Activated CD8-positive, alpha-beta T cell treated with anti-CD3 and anti-CD28 coated beads for 36 hours (primary cell): ENCODE measurements at regions of chr6 and their contacts with region 1.

Region 1: GRCh38 chr6:26196846-26197648 is 109.8 kb downstream of the HFE start:
- DNase-seq: peak; percentile 86
- ATAC-seq: peak; percentile 48
- H3K4me3 Mint-ChIP-seq: peak overlapping the region; percentile 96
- H3K27ac Mint-ChIP-seq: peak overlapping the region; percentile 96
- H3K4me1 Mint-ChIP-seq: peaks cover 24% of the 10 kb centered on the region
- H3K27me3 Mint-ChIP-seq: no peaks in the 10 kb centered on the region
- CTCF ChIP-seq: no peak

Region 2: DNA sequence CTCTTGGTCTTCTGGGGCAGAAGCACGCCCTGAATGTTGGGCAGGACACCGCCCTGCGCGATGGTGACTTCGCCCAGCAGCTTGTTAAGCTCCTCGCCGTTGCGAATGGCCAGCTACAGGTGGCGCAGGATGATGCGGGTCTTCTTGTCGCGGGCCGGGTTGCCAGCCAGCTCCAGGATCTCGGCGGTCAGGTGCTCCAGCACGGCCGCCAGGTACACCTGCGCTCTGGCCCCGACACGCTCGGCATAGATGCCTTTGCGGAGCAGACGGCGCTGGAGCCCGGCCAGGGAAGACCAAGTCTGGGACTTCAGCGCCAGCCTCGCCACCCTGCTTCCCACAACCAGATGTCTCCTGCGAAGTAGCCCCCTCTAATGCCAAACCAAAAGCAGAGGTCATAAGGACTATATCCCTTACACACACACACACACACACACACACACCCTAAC is 315.0 kb before region 1 on chr6:
- CTCF ChIA-PET with region 1: no interaction called
- POLR2A ChIA-PET with region 1: no interaction called
- intact Hi-C with region 1: no loop called
- DNase-seq: peak; percentile 53
- ATAC-seq: peak; percentile 92
- H3K4me3 Mint-ChIP-seq: peak overlapping the region; percentile 70
- H3K27ac Mint-ChIP-seq: peak overlapping the region; percentile 23
- H3K4me1 Mint-ChIP-seq: peaks cover 3% of the 10 kb centered on the region
- H3K27me3 Mint-ChIP-seq: peaks cover 3% of the 10 kb centered on the region
- CTCF ChIP-seq: peak; percentile 45

Region 3: GRCh38 chr6:26031595-26032339 is 165.3 kb before region 1 on chr6:
- CTCF ChIA-PET with region 1: no interaction called
- POLR2A ChIA-PET with region 1: interaction called, 99 read pairs
- intact Hi-C with region 1: loop called (anchors 5 kb)
- DNase-seq: peak; percentile 95
- ATAC-seq: peak; percentile 66
- H3K4me3 Mint-ChIP-seq: peak overlapping the region; percentile 91
- H3K27ac Mint-ChIP-seq: peak overlapping the region; percentile 98
- H3K4me1 Mint-ChIP-seq: peaks cover 50% of the 10 kb centered on the region
- H3K27me3 Mint-ChIP-seq: peaks cover 3% of the 10 kb centered on the region
- CTCF ChIP-seq: no peak

Region 4: GRCh38 chr6:26071135-26071534 is 125.9 kb before region 1 on chr6:
- CTCF ChIA-PET with region 1: no interaction called
- POLR2A ChIA-PET with region 1: no interaction called
- intact Hi-C with region 1: no loop called
- DNase-seq: no peak
- ATAC-seq: no peak
- H3K4me3 Mint-ChIP-seq: no peak overlapping the region
- H3K27ac Mint-ChIP-seq: no peak overlapping the region
- H3K4me1 Mint-ChIP-seq: no peaks in the 10 kb centered on the region
- H3K27me3 Mint-ChIP-seq: peaks cover 3% of the 10 kb centered on the region
- CTCF ChIP-seq: no peak

Region 5: GRCh38 chr6:26103770-26104456 is 93.1 kb before region 1 on chr6:
- CTCF ChIA-PET with region 1: no interaction called
- POLR2A ChIA-PET with region 1: interaction called, 28 read pairs
- intact Hi-C with region 1: no loop called
- DNase-seq: peak; percentile 90
- ATAC-seq: peak; percentile 87
- H3K4me3 Mint-ChIP-seq: peak overlapping the region; percentile 85
- H3K27ac Mint-ChIP-seq: peak overlapping the region; percentile 98
- H3K4me1 Mint-ChIP-seq: peaks cover 15% of the 10 kb centered on the region
- H3K27me3 Mint-ChIP-seq: peaks cover 2% of the 10 kb centered on the region
- CTCF ChIP-seq: peak; percentile 46

Region 6: DNA sequence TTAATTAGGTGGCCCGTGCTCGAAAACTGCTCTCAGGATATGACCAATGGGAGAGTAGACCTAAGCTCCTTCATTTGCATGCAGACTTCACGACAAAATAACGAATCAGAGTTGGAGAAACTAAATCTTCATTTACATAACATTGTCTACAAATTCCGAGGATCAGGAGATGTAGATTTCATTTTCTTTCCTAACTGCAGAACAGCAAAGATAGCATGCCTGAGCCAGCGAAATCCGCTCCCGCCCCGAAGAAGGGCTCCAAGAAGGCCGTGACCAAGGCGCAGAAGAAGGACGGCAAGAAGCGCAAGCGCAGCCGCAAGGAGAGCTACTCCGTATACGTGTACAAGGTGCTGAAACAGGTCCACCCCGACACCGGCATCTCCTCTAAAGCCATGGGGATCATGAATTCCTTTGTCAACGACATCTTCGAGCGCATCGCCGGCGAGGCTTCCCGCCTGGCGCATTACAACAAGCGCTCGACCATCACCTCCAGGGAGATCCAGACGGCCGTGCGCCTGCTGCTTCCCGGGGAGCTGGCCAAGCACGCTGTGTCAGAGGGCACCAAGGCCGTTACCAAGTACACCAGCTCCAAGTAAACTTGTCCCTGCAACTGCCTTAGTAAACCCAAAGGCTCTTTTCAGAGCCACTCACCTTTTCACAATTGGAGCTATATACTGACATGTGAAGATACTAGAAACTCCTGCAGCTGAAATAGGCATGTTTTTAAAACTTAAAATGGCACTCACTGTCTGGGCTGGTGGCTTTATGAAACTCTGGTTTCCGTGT is 13.3 kb before region 1 on chr6:
- CTCF ChIA-PET with region 1: interaction called, 24 read pairs
- POLR2A ChIA-PET with region 1: interaction called, 883 read pairs
- intact Hi-C with region 1: no loop called
- DNase-seq: peak; percentile 72
- ATAC-seq: peak; percentile 82
- H3K4me3 Mint-ChIP-seq: peak overlapping the region; percentile 76
- H3K27ac Mint-ChIP-seq: peak overlapping the region; percentile 84
- H3K4me1 Mint-ChIP-seq: peaks cover 38% of the 10 kb centered on the region
- H3K27me3 Mint-ChIP-seq: no peaks in the 10 kb centered on the region
- CTCF ChIP-seq: no peak

Region 7: DNA sequence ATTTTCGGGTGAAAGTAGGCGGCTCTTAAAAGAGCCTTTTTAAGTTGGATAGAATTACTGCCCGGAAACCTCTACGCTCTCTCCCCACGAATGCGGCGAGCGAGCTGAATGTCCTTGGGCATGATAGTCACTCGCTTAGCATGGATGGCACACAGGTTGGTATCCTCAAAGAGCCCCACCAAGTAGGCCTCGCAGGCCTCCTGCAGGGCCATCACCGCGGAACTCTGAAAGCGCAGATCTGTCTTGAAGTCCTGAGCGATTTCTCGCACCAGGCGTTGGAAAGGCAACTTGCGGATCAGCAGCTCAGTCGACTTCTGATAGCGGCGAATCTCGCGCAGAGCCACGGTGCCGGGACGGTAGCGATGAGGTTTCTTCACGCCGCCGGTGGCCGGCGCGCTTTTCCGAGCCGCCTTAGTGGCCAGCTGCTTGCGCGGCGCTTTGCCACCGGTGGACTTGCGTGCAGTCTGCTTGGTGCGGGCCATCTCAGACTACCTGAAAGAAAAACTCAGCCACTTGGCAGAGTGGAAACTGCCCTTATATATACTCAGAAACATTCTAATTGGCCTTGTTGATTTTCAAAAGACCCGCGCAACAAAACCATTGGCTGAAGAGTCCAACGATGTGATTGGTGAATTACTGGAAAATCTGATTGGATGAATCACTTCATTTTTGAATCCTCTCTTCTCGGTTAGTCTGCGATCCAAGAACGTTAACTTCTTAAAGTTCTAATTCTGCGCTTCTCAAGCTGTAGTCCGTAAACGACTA is 74.0 kb after region 1 on chr6:
- CTCF ChIA-PET with region 1: interaction called, 3 read pairs
- POLR2A ChIA-PET with region 1: interaction called, 153 read pairs
- intact Hi-C with region 1: loop called (anchors 5 kb)
- DNase-seq: peak; percentile 87
- ATAC-seq: peak; percentile 43
- H3K4me3 Mint-ChIP-seq: no peak overlapping the region
- H3K27ac Mint-ChIP-seq: no peak overlapping the region
- H3K4me1 Mint-ChIP-seq: peaks cover 18% of the 10 kb centered on the region
- H3K27me3 Mint-ChIP-seq: no peaks in the 10 kb centered on the region
- CTCF ChIP-seq: no peak

Region 8: GRCh38 chr6:27864906-27865849 is 1668.1 kb after region 1 on chr6:
- CTCF ChIA-PET with region 1: no interaction called
- POLR2A ChIA-PET with region 1: interaction called, 10 read pairs
- intact Hi-C with region 1: no loop called
- DNase-seq: peak; percentile 81
- ATAC-seq: peak; percentile 58
- H3K4me3 Mint-ChIP-seq: peak overlapping the region; percentile 91
- H3K27ac Mint-ChIP-seq: peak overlapping the region; percentile 98
- H3K4me1 Mint-ChIP-seq: peaks cover 27% of the 10 kb centered on the region
- H3K27me3 Mint-ChIP-seq: no peaks in the 10 kb centered on the region
- CTCF ChIP-seq: no peak